MCF 10A (cell line): ENCODE measurements at regions of chr2 and their contacts with region 1.

Region 1: GRCh38 chr2:218395797-218396687 is 3.6 kb upstream of the CTDSP1 start:
- DNase-seq: peak; percentile 95
- H3K4me3 Mint-ChIP-seq: peak overlapping the region; percentile 98
- H3K27ac Mint-ChIP-seq: peak overlapping the region; percentile 90
- H3K4me1 Mint-ChIP-seq: peaks cover 12% of the 10 kb centered on the region
- H3K27me3 Mint-ChIP-seq: no peaks in the 10 kb centered on the region
- CTCF ChIP-seq: peak; percentile 86

Region 2: GRCh38 chr2:218186355-218186766 is 209.7 kb before region 1 on chr2:
- CTCF ChIA-PET with region 1: no interaction called
- POLR2A ChIA-PET with region 1: no interaction called
- intact Hi-C with region 1: loop called (anchors 5 kb)
- DNase-seq: peak; percentile 82
- H3K4me3 Mint-ChIP-seq: no peak overlapping the region
- H3K27ac Mint-ChIP-seq: no peak overlapping the region
- H3K4me1 Mint-ChIP-seq: peaks cover 6% of the 10 kb centered on the region
- H3K27me3 Mint-ChIP-seq: no peaks in the 10 kb centered on the region
- CTCF ChIP-seq: peak; percentile 84

Region 3: DNA sequence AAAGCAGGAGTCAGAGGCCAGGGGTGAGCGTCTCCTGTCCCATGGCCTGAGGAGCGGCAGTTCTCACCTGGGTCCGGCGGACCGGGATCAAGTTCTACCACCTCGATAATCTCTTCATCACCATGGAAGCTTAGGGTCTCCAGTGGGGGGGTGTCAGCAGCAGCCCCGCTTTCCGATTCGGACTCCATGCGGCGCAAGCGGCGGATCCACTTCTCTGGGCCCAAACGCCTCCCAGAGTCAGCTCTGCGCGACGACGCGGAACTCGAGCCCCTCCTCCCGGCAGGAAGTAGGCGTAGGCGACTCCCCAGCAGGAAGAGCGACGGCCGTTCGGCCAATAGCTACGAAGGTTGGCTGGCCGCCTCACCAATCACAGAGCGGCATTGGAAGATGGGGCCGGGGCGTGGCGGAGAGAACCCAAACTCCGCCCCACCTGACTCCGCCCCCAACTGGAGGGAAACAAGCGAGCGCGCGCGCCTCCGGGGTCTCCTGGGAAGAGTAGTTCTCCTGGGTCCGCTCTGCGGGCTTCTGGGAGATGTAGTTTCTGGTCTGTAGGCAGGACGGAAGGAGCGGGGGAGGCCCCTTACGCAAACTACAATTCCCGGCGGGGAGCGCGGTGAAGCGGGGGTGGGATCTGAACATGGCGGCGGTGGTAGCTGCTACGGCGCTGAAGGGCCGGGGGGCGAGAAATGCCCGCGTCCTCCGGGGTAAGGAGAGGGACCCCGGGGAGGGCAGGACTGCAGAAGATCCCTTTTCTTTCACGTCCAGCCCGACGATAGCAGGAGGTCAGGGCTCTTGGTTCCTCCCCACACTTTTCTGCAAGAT is 125.9 kb before region 1 on chr2 and contains the starts of genes AAMP and PNKD:
- CTCF ChIA-PET with region 1: interaction called, 49 read pairs
- POLR2A ChIA-PET with region 1: interaction called, 57 read pairs
- intact Hi-C with region 1: loop called (anchors 1 kb)
- DNase-seq: peak; percentile 100
- H3K4me3 Mint-ChIP-seq: peak within 1 kb of the TSS; percentile 97
- H3K27ac Mint-ChIP-seq: peak within 1 kb of the TSS; percentile 88
- H3K4me1 Mint-ChIP-seq: peaks cover 42% of the 10 kb centered on the region
- H3K27me3 Mint-ChIP-seq: no peaks in the 10 kb centered on the region
- CTCF ChIP-seq: no peak
- total RNA-seq, gene AAMP: 95.7 and 98.7 TPM in 2 replicates
- total RNA-seq, gene PNKD: 13.0 and 23.1 TPM in 2 replicates

Region 4: DNA sequence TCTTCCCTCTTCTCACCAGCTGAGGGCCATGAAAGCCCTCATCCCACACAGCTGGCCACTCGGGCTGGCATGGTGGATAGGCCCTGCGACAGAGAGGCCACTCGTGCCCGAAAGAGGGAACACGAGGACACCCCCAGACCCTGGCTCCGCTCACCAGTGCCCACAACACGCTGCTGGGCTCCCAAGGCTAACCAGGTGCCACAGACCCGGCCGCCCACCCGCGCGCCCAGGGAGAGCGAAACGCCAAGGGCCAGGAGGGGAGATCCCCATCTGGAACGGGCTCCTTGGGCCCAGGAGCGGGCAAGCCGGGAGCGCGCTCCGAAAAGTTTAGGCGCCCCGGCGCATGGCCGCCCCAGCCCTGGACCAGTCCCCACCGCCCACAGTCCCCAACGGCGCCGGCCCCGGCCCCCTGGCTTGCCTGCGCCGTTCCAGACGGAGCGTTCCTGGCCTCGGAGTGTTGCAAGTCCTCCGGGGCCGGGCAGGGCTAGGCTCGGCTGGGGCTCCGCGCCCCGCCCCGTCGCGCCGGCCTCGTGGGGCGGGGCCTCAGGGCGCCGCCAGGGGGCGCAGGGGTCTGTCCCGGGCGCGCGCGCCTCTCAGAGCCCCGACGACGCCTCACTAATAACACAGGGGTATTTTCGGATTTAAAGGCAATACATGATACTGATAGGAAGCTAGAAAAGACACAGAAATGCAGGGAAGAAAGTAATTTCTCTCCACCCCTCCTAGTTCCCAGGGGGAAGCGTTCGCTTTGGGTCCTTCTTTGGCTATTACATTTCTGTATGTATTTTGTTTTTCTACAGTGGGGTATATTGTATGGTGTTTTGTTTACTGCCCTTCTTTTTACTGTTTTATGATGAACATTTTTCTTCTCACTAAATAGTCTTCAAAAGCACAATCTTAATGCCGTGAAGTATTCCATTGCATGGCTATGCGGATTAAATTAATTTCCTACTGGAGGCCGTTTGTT is 103.7 kb before region 1 on chr2 and contains the start of gene TMBIM1:
- CTCF ChIA-PET with region 1: interaction called, 22 read pairs
- POLR2A ChIA-PET with region 1: interaction called, 108 read pairs
- intact Hi-C with region 1: loop called (anchors 2 kb)
- DNase-seq: peak; percentile 77
- H3K4me3 Mint-ChIP-seq: peak within 1 kb of the TSS; percentile 75
- H3K27ac Mint-ChIP-seq: peak within 1 kb of the TSS; percentile 91
- H3K4me1 Mint-ChIP-seq: peaks cover 34% of the 10 kb centered on the region
- H3K27me3 Mint-ChIP-seq: no peaks in the 10 kb centered on the region
- CTCF ChIP-seq: peak; percentile 90
- total RNA-seq, gene TMBIM1: 96.8 and 107 TPM in 2 replicates

Region 5: DNA sequence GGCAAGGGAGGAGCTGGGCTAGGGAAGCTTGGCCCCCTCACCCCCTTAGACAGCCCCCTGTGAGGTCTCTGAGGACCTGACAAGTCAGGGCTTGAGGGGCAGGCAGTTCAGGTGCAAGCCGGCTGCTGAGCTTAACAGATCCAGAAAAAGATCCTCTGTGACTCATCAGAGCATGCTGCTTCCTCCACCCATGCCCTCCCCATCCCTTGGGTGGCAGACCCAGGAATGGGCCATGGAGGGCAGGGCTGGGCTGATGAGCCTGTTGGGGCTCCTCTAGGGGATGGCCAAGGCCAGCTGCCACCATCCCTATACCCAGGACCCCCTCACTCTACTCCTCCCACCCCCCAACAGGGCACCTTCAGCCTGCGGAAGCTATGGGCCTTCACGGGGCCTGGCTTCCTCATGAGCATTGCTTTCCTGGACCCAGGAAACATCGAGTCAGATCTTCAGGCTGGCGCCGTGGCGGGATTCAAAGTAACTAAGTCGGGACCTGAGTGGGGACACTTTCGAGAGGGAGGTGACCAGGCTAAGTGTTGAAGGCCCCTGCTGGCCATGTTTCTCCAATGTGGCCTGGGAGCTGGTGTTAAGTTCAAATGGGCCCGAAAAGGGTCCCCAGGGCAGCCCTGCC is 12.0 kb before region 1 on chr2:
- CTCF ChIA-PET with region 1: interaction called, 10 read pairs
- POLR2A ChIA-PET with region 1: no interaction called
- intact Hi-C with region 1: no loop called
- DNase-seq: peak; percentile 48
- H3K4me3 Mint-ChIP-seq: no peak overlapping the region
- H3K27ac Mint-ChIP-seq: no peak overlapping the region
- H3K4me1 Mint-ChIP-seq: peaks cover 10% of the 10 kb centered on the region
- H3K27me3 Mint-ChIP-seq: no peaks in the 10 kb centered on the region
- CTCF ChIP-seq: no peak

Region 6: GRCh38 chr2:218438601-218438995 is 42.6 kb after region 1 on chr2:
- CTCF ChIA-PET with region 1: no interaction called
- POLR2A ChIA-PET with region 1: no interaction called
- intact Hi-C with region 1: no loop called
- DNase-seq: no peak
- H3K4me3 Mint-ChIP-seq: no peak overlapping the region
- H3K27ac Mint-ChIP-seq: no peak overlapping the region
- H3K4me1 Mint-ChIP-seq: no peaks in the 10 kb centered on the region
- H3K27me3 Mint-ChIP-seq: no peaks in the 10 kb centered on the region
- CTCF ChIP-seq: no peak

Region 7: GRCh38 chr2:218456849-218457248 is 60.8 kb after region 1 on chr2:
- CTCF ChIA-PET with region 1: no interaction called
- POLR2A ChIA-PET with region 1: no interaction called
- intact Hi-C with region 1: no loop called
- DNase-seq: no peak
- H3K4me3 Mint-ChIP-seq: no peak overlapping the region
- H3K27ac Mint-ChIP-seq: no peak overlapping the region
- H3K4me1 Mint-ChIP-seq: no peaks in the 10 kb centered on the region
- H3K27me3 Mint-ChIP-seq: no peaks in the 10 kb centered on the region
- CTCF ChIP-seq: no peak

Region 8: DNA sequence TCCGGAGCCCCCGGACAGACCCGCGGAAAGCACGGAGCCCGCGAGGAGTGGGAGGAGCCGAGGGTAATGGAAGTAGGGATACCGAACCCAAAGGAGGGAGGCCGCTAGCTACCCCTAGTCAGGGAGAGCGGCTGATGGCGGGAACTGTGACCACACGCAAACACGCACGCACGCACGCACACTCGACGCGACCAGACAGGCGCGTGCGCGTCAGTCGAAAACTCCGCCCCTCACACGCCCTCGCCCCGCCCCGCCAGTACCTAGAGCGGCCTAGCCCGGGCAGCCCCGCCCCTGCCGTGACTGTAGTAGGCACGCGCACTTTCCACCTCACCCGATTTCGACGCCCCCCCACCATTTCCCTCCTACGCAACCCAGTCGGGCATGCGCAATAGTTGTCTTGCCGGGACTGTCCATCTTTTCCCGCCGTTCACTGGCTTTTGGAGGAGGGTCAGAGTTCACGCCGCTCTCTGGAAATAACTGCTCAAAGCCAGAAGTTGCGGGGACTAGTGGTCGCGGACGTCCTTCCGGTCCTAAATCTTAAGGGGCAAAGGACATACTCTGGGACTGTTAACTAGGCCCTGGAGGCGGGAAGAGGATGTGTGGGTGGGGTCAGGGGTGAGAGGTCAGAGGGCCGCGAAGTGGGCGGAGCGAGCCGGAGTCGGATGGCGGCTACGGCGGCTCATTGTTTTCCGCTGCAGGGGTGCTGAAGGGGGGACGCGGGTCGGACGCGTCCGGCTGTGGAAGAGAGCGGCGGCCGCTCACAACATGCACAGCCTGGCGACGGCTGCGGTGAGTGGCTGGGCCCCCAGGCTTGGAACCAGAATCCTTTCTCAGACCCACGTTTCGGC is 172.4 kb after region 1 on chr2 and contains the starts of genes CNOT9 and USP37:
- CTCF ChIA-PET with region 1: no interaction called
- POLR2A ChIA-PET with region 1: interaction called, 3 read pairs
- intact Hi-C with region 1: loop called (anchors 2 kb)
- DNase-seq: peak; percentile 98
- H3K4me3 Mint-ChIP-seq: peak within 1 kb of the TSS; percentile 92
- H3K27ac Mint-ChIP-seq: peak within 1 kb of the TSS; percentile 86
- H3K4me1 Mint-ChIP-seq: peaks cover 40% of the 10 kb centered on the region
- H3K27me3 Mint-ChIP-seq: no peaks in the 10 kb centered on the region
- CTCF ChIP-seq: no peak
- total RNA-seq, gene CNOT9: 64.9 and 66.1 TPM in 2 replicates
- total RNA-seq, gene USP37: 11.6 and 16.4 TPM in 2 replicates